ENCODE measurements at regions of chr3 and their contacts with region 1.

Region 1: GRCh38 chr3:8458711-8459110 is 42.9 kb upstream of the LMCD1 start:
- DNase-seq: peak; percentile 90

Region 2: GRCh38 chr3:7000501-7000900 is 1458.2 kb before region 1 on chr3:
- intact Hi-C with region 1: loop called in 1 of 2 experiments (anchors 5 kb)
- DNase-seq: no peak

Region 3: GRCh38 chr3:8499181-8499611 is 40.5 kb after region 1 on chr3:
- intact Hi-C with region 1: loop called in 1 of 2 experiments (anchors 5 kb)
- DNase-seq: no peak

Measured in posterior vena cava (tissue), 2 donors.